AG04450 (cell line): ENCODE measurements at regions of chr1 and their contacts with region 1.

Region 1: DNA sequence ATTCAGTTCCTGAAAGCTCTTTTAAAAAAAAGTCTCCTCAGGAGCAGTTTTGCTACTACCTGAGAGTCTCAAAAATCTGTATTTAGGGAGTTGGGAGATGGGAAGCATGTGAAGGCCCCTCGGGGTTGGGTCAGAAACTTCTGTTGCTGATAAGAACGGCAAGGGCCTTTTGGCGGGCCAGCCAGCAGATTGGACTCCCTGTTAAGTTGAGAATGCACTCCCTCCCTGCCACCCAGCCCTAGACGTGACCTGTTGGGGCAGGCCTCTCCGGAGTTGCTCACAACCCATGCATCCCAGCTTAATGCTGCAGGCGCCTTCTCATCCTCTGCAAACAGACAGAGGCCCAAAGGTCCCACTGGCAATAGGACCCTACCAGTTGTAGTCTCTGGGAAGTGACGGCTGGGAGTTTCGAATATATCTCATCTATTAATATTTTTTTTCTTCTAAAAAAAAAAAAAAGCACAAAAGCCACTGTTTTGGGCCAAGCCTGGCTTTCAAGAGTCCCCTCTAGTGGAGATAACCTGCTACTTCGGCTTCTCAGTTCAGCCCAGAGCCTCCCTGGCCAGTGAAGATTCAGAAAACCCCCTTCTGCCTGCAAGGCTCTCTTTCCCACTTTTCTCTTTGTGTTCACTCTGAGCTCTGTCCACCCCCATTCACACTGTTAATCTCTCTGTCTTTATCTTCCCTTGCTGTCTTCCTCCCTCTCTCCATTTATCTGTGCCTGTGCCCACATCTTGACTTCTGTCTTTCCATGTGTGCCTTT is 5.3 kb downstream of the PLXNA2 start:
- DNase-seq: no peak
- H3K4me3 ChIP-seq: no peak overlapping the region
- H3K27ac ChIP-seq: no peak overlapping the region
- H3K27me3 ChIP-seq: peaks cover 25% of the 10 kb centered on the region
- CTCF ChIP-seq: peak; percentile 84

Region 2: DNA sequence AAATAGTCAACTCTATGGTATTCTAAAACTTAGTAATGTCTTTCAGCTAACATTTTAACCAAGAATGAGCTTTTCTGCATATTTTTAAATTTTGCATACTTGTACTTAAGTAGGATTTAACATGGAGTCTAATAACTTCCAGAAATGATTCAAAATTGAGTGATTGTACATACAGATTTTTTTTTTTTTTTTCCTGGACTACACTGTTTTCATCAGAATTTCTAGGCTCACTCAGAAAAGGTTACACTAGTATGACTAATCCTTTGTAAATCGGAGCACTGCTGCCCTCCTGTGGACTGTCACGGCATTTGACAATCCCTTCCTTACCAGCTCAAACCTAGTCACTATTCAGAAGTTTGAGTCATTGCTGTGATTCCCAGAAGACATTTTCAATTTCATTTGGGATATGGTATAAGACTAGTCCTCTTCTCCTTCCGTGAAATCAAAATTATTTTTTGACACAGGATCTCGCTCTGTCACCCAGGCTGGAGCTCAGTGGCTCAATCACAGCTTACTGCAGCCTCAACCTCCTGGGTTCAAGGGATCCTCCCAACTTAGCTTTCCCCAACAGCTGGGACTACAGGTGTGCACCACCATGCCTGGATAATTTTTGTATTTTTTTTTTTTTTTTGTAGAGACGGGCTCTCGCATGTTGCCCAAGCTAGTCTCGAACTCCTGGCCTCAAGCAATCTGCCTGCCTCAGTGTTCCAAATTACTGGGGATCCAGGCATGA is 441.5 kb before region 1 on chr1:
- CTCF ChIA-PET with region 1: no interaction called
- POLR2A ChIA-PET with region 1: no interaction called
- DNase-seq: peak; percentile 68
- H3K4me3 ChIP-seq: no peak overlapping the region
- H3K27ac ChIP-seq: no peak overlapping the region
- H3K27me3 ChIP-seq: no peaks in the 10 kb centered on the region
- CTCF ChIP-seq: peak; percentile 81

Region 3: GRCh38 chr1:208132287-208132883 is 106.5 kb before region 1 on chr1:
- CTCF ChIA-PET with region 1: interaction called, 32 read pairs
- POLR2A ChIA-PET with region 1: no interaction called
- DNase-seq: no peak
- H3K4me3 ChIP-seq: no peak overlapping the region
- H3K27ac ChIP-seq: no peak overlapping the region
- H3K27me3 ChIP-seq: peaks cover 2% of the 10 kb centered on the region
- CTCF ChIP-seq: peak; percentile 73

Region 4: GRCh38 chr1:208192995-208193394 is 45.9 kb before region 1 on chr1:
- CTCF ChIA-PET with region 1: no interaction called
- POLR2A ChIA-PET with region 1: no interaction called
- DNase-seq: no peak
- H3K4me3 ChIP-seq: no peak overlapping the region
- H3K27ac ChIP-seq: no peak overlapping the region
- H3K27me3 ChIP-seq: no peaks in the 10 kb centered on the region
- CTCF ChIP-seq: no peak

Region 5: GRCh38 chr1:208219659-208220282 is 19.1 kb before region 1 on chr1:
- CTCF ChIA-PET with region 1: interaction called, 29 read pairs
- POLR2A ChIA-PET with region 1: no interaction called
- DNase-seq: no peak
- H3K4me3 ChIP-seq: no peak overlapping the region
- H3K27ac ChIP-seq: peak overlapping the region; percentile 47
- H3K27me3 ChIP-seq: no peaks in the 10 kb centered on the region
- CTCF ChIP-seq: no peak

Region 6: DNA sequence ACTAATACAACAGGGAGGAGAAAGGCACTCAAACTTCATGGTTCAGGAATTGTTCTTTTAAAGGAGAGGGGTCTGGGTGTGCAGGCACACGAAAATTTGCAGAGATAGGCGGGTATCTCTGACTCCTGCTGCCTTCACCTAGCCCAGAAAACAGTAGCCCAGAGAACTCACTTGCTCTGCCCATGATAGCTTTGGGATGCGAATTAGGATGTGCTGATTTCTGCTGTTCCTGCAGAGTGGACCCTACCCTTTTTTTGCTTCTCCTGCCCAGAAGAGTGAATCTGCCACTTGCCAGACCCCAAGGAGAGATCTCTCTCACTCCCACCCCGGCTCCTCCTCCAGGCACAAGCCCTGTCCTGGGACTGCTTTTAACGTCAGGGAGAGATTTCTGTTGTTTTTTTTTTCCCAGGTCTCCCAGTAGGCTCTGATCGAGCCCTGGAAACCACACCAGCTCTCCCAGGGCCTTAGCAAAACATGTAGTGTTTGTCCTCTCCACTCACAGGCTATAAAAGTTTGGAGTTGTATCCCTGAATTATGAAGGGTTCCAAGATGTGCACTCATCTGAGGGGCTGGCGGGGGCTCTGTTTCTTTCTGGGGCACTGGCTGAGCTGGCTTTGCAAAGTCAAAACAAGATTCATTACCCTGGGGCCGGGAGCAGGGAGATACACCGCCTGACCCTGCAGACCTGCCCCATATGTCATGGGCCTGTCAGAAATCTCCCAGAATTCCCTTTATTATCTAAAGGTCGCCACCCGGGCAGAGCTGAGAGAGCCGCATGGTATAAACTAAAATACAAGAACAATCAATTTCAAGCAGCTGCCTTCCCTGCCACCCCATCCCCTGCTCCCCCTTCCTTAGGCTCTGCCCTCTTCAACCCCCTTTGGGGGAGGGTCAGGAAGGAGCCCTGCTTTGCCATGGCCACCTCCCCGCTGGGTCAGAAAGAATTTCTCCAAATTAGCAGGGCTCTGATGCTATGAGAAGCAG is 12.6 kb before region 1 on chr1:
- CTCF ChIA-PET with region 1: interaction called, 29 read pairs
- POLR2A ChIA-PET with region 1: no interaction called
- DNase-seq: no peak
- H3K4me3 ChIP-seq: no peak overlapping the region
- H3K27ac ChIP-seq: no peak overlapping the region
- H3K27me3 ChIP-seq: no peaks in the 10 kb centered on the region
- CTCF ChIP-seq: no peak

Region 7: DNA sequence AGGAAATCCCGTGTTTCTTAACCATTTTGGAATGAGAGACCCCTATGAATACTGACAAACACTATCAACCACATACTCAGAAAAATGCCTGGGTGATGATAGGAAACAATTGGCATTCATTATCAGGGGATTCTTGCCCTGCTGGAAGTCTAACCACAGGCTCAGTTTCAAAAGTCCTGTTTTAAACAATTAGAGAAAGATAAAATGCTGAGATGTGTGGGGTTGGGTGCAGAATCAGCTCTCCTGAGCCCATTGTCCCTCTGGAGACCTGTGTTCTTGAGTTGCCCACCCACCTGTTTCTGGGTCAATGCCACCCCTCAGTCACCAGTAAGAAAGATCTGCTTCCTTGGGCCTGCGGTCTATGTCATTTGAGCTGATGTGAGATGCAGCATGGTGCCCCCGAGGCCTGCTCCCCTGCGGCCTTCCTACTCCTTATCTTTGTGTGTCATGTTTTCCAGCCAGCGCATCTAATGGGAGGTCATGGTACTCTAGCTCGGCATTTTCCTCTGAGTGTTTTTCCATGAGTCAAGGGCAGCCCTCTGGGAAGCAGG is 135.6 kb after region 1 on chr1:
- CTCF ChIA-PET with region 1: no interaction called
- POLR2A ChIA-PET with region 1: no interaction called
- DNase-seq: no peak
- H3K4me3 ChIP-seq: no peak overlapping the region
- H3K27ac ChIP-seq: no peak overlapping the region
- H3K27me3 ChIP-seq: no peaks in the 10 kb centered on the region
- CTCF ChIP-seq: no peak

Region 8: GRCh38 chr1:210151052-210151672 is 1912.3 kb after region 1 on chr1:
- CTCF ChIA-PET with region 1: no interaction called
- POLR2A ChIA-PET with region 1: no interaction called
- DNase-seq: no peak
- H3K4me3 ChIP-seq: no peak overlapping the region
- H3K27ac ChIP-seq: no peak overlapping the region
- H3K27me3 ChIP-seq: no peaks in the 10 kb centered on the region
- CTCF ChIP-seq: no peak